ENCODE measurements at regions of chr2 and their contacts with region 1.

Region 1: DNA sequence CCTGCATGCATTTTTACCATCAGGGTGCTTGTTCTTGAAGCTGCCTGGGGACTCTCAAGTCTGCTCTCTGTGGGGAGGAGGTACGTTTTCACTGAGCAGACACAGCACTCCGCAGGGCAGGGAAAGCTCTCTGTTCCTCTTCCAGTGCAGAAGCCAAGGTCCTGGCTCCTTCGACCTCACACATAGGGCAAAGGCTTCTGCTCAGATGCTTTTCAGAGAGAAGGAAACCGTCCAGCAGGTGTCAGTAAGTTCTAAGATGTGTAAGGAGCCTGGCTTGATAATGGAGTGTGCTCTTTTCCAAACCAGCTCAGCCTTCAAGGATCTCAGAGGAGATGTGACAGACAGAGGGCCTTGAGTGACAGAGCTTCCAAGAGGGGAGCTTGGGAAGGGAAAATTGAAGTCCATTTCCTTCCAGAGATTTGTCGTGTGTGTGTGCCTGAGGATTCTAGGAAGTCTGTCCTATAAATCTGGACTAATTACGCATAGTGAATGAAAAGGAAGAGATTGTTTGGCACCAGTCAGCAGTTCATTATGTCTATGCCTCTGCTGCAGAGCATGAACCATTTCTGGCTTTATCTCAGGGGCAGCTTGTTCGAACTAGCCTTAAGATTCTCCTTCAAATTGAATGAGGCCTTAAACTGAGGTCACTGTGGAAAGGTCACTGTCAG is 67.3 kb upstream of the UPP2 start:
- DNase-seq: peak in 1 of 2 experiments; percentile 27
- H3K4me3 ChIP-seq: no peak overlapping the region
- H3K27ac ChIP-seq: no peak overlapping the region
- H3K4me1 ChIP-seq: no peaks in the 10 kb centered on the region
- H3K27me3 ChIP-seq: no peaks in the 10 kb centered on the region
- CTCF ChIP-seq: peak; percentile 44

Region 2: DNA sequence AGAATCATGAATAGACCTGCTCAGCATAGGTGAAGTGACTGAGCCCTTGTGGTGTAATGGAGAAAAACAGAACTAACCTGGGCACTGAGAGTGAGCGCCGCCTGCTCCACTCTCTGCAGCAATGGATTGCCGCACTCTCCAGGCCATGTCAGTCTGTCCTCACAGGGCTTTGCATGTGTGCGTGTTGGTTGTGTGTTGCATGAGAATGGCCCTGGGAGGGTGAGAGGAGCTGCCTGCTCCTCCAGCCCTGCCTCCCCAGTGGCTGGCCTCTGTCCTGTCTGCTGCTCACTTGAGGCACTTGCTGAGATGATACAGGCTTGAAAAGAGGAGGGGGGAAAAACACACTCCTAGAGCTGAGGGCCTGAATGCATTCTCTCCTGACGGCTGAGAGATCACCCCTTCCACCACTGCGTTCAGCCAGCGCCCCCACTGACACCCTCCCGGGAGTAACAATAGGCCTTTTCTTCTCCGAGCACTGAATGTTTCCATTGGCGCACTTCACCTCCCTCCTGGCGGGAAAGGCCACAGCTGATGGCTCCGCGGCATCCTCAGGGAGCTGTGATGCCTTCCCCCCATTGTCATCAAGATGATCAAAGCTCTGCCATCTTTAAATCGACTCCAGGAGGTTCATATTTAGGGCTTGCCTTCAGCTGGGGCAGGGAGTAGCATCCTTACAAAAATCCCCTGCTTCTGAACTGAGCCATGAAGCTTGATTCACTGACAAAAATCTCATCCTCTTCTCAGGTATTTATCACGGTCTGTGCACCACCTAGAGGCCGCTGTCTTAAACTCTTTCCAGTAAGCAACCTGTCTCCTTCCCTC is 710.9 kb after region 1 on chr2:
- CTCF ChIA-PET with region 1: no interaction called
- POLR2A ChIA-PET with region 1: no interaction called
- intact Hi-C with region 1: loop called (anchors 2 kb)
- DNase-seq: peak in 1 of 2 experiments; percentile 35
- H3K4me3 ChIP-seq: no peak overlapping the region
- H3K27ac ChIP-seq: no peak overlapping the region
- H3K4me1 ChIP-seq: no peaks in the 10 kb centered on the region
- H3K27me3 ChIP-seq: no peaks in the 10 kb centered on the region
- CTCF ChIP-seq: peak; percentile 65